ENCODE measurements at regions of chr2 and their contacts with region 1.

Region 1: GRCh38 chr2:200901459-200902072 is 12.4 kb downstream of the NIF3L1 start:
- DNase-seq: peak; percentile 72 to 92
- H3K4me3 ChIP-seq: no peak overlapping the region
- H3K27ac ChIP-seq: no peak overlapping the region
- H3K4me1 ChIP-seq: peaks cover 0 to 16% (median 6%) of the 10 kb centered on the region in 4 donors
- H3K27me3 ChIP-seq: no peaks in the 10 kb centered on the region
- CTCF ChIP-seq: peak in 5 of 7 experiments; percentile 70 to 87 (median 76)
- EP300 ChIP-seq: no peak
- POLR2A ChIP-seq: no peak

Region 2: DNA sequence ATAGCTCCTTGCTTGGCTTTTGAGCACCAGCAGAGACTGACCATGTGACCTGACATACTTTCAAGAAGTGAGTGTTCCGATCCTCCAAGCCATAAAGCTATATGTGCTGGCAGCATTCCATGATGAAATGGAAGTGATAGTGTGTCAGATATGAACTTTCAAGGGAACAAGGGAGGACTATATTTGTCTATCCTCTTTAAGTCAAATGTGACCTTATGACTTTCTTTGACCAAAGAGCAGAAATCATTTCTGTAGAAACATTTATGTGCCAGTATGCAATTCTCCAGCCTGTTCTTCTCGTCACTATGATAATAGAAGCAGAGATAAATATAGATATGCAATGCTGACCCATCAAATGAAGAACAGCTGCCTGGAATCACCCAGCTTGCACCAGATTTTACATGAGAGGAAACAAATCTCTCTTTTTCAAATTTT is 155.5 kb after region 1 on chr2:
- intact Hi-C with region 1: loop called (anchors 10 kb)
- DNase-seq: peak in 1 of 2 donors; percentile 18
- H3K4me3 ChIP-seq: no peak overlapping the region
- H3K27ac ChIP-seq: no peak overlapping the region
- H3K4me1 ChIP-seq: peaks cover 10 to 46% (median 28%) of the 10 kb centered on the region in 4 donors
- H3K27me3 ChIP-seq: no peaks in the 10 kb centered on the region
- CTCF ChIP-seq: no peak
- EP300 ChIP-seq: no peak
- POLR2A ChIP-seq: no peak

Region 3: GRCh38 chr2:201171259-201171814 is 269.8 kb after region 1 on chr2:
- intact Hi-C with region 1: loop called (anchors 10 kb)
- DNase-seq: no peak
- H3K4me3 ChIP-seq: no peak overlapping the region
- H3K27ac ChIP-seq: no peak overlapping the region
- H3K4me1 ChIP-seq: peaks cover 0 to 19% (median 9%) of the 10 kb centered on the region in 4 donors
- H3K27me3 ChIP-seq: no peaks in the 10 kb centered on the region
- CTCF ChIP-seq: no peak
- EP300 ChIP-seq: no peak
- POLR2A ChIP-seq: no peak

Measured in stomach (tissue), 19 donors.